Dorsolateral prefrontal cortex (tissue), 120 donors: ENCODE measurements at regions of chr13 and their contacts with region 1.

Region 1: DNA sequence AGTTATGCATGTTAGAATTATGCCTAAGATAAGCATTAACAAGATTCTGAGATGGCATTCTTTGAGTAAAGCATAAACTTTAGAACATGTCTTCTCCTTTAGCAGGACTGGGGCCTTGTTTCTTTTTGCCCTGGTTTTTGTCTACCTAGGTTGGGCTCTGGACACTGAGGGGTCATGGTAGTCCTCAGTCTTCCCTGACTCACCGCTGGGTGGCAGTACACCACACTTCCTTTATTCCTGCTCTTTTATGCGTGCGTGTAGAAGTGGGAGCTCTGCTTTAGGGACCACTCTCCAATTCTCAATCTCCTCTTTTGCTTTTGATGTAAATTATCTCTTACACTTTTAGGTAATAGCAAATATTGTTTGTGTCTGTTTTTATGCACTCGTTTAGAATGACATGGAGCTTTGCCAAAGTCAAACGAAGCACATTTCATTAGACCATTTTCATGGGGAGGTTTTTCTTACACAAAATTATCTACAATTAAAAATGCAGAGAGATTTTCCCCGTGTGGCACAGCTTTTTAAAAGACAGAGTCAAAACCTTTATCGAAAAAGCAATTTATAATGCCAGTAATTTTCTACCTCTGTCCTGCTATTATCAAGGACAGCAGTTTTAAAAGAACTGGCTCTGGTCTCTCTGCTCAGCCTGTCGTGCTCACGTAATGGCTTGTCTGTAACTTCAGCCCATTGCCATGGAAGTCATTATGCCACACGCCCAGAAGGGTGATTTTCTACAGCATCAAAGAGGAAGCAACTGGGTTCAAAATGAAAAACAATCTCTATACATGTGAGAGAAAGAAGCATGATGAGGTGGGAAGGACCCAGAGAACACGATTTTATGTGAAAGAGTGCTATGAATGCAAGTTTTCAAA is 413.9 kb downstream of the COG6 start:
- DNase-seq: peak; percentile 37 to 85 (median 74)
- H3K4me3 ChIP-seq: peak overlapping the region in 37 of 59 donors; percentile 3 to 52 (median 32)
- H3K27ac ChIP-seq: peak overlapping the region in 28 of 59 donors; percentile 3 to 69 (median 34)
- H3K27me3 ChIP-seq: no peaks in the 10 kb centered on the region
- CTCF ChIP-seq: peak; percentile 70 to 96 (median 88)

Region 2: GRCh38 chr13:39942552-39943273 is 126.7 kb before region 1 on chr13:
- intact Hi-C with region 1: loop called in 1 of 2 experiments (anchors 10 kb)
- DNase-seq: peak in 7 of 10 donors; percentile 15 to 67 (median 31)
- H3K4me3 ChIP-seq: no peak overlapping the region
- H3K27ac ChIP-seq: no peak overlapping the region
- H3K27me3 ChIP-seq: peaks cover 0 to 7% (median 0%) of the 10 kb centered on the region in 45 donors
- CTCF ChIP-seq: peak; percentile 36 to 91 (median 79)

Region 3: DNA sequence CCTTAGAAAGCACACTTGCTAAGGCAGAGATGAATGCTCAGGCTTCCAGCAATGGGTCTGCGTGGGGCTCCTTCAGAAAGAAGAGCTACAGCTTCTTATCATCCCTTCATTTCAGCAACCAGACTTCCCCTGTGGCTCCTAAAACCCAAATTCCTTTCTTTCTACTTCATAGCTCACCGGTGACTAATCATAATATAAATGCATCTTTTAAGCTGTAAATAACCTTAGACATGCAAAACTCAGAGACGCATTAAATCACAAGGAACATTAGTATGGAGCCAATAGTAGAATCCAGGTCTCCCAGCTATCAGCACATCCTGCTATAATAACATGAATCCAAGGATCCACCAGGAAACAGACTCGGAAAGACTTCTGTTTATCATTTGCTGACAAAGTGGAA is 38.4 kb before region 1 on chr13:
- intact Hi-C with region 1: no loop called
- DNase-seq: no peak
- H3K4me3 ChIP-seq: no peak overlapping the region
- H3K27ac ChIP-seq: no peak overlapping the region
- H3K27me3 ChIP-seq: peaks cover 0 to 4% (median 0%) of the 10 kb centered on the region in 45 donors
- CTCF ChIP-seq: no peak

Region 4: GRCh38 chr13:40190641-40191100 is 121.3 kb after region 1 on chr13:
- intact Hi-C with region 1: loop called (anchors 2 to 10 kb)
- DNase-seq: peak in 8 of 10 donors; percentile 71 to 86 (median 81)
- H3K4me3 ChIP-seq: peak overlapping the region in 11 of 59 donors; percentile 4 to 49 (median 24)
- H3K27ac ChIP-seq: peak overlapping the region; percentile 76 to 99 (median 97)
- H3K27me3 ChIP-seq: no peaks in the 10 kb centered on the region
- CTCF ChIP-seq: no peak

Region 5: GRCh38 chr13:40377783-40378182 is 308.4 kb after region 1 on chr13:
- intact Hi-C with region 1: loop called in 1 of 2 experiments (anchors 10 kb)
- DNase-seq: no peak
- H3K4me3 ChIP-seq: no peak overlapping the region
- H3K27ac ChIP-seq: peak overlapping the region in 1 of 59 donors; percentile 10
- H3K27me3 ChIP-seq: peaks cover 0 to 10% (median 0%) of the 10 kb centered on the region in 45 donors
- CTCF ChIP-seq: no peak

Region 6: GRCh38 chr13:40666045-40666904 is 596.9 kb after region 1 on chr13 and contains the start of gene FOXO1:
- intact Hi-C with region 1: loop called in 1 of 2 experiments (anchors 5 kb)
- DNase-seq: peak; percentile 70 to 92 (median 80)
- H3K4me3 ChIP-seq: peak within 1 kb of the TSS; percentile 59 to 93 (median 83)
- H3K27ac ChIP-seq: peak within 1 kb of the TSS; percentile 77 to 99 (median 95)
- H3K27me3 ChIP-seq: peaks cover 0 to 40% (median 4%) of the 10 kb centered on the region in 45 donors
- CTCF ChIP-seq: peak in 4 of 56 donors; percentile 2 to 36 (median 8)
- total RNA-seq, gene FOXO1: 9.8 to 31.6 (median 16.3) TPM